ENCODE measurements at regions of chr17 and their contacts with region 1.

Region 1: GRCh38 chr17:773467-774312 is 8.4 kb downstream of the GLOD4 start:
- DNase-seq: no peak
- ATAC-seq: no peak
- H3K4me3 ChIP-seq: no peak overlapping the region
- H3K4me3 Mint-ChIP-seq: no peak overlapping the region
- H3K27ac ChIP-seq: no peak overlapping the region
- H3K27ac Mint-ChIP-seq: peak overlapping the region in 1 of 2 donors; percentile 13
- H3K4me1 ChIP-seq: no peaks in the 10 kb centered on the region
- H3K4me1 Mint-ChIP-seq: peaks cover 6 to 13% (median 8%) of the 10 kb centered on the region in 3 donors
- H3K27me3 ChIP-seq: no peaks in the 10 kb centered on the region
- H3K27me3 Mint-ChIP-seq: no peaks in the 10 kb centered on the region

Region 2: DNA sequence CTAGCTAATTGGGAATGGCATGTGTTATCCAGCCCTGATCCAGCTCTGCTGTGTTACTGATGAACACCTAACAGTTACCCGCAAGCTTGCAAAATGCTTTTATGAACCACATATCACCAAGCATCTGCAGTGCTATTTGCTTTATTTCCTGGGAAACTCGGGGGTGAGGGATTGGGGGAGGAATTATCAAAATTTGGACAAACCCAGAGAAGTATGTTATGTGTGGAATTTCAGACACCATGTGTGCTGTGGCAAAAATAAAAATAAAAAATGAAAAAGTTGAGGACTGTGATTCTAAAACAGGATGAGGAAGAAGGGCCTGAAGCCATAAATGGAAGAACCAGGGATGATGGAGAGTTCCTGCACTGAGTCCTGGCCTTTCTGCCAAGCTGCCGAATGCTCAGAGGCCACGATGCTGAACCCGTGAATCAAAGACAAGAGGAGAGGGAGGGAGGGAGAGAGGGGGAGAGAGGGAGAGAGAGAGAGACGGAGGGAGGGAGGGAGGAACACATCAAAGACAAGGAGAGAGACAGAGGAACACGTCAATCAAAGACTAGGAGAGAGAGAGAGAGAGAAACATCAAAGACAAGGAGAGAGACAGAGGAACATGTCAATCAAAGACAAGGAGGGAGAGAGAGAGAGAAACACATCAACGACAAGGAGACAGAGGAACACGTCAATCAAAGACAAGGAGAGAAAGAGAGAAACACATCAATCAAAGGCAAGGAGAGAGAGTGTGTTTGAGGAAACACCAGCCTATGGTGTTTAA is 98.2 kb after region 1 on chr17:
- CTCF ChIA-PET with region 1: no interaction called
- POLR2A ChIA-PET with region 1: interaction called in 1 of 2 experiments, 12 read pairs
- DNase-seq: peak in 1 of 35 experiments; percentile 16
- ATAC-seq: peak in 1 of 4 experiments; percentile 21
- H3K4me3 ChIP-seq: no peak overlapping the region
- H3K4me3 Mint-ChIP-seq: peak overlapping the region in 1 of 3 donors; percentile 24
- H3K27ac ChIP-seq: no peak overlapping the region
- H3K27ac Mint-ChIP-seq: no peak overlapping the region
- H3K4me1 ChIP-seq: peaks cover 0 to 8% of the 10 kb centered on the region in 2 experiments
- H3K4me1 Mint-ChIP-seq: peaks cover 9 to 17% (median 14%) of the 10 kb centered on the region in 3 donors
- H3K27me3 ChIP-seq: peaks cover 0 to 24% of the 10 kb centered on the region in 2 experiments
- H3K27me3 Mint-ChIP-seq: peaks cover 11 to 26% of the 10 kb centered on the region in 2 donors